A673 (cell line): ENCODE measurements at regions of chr10 and their contacts with region 1.

Region 1: DNA sequence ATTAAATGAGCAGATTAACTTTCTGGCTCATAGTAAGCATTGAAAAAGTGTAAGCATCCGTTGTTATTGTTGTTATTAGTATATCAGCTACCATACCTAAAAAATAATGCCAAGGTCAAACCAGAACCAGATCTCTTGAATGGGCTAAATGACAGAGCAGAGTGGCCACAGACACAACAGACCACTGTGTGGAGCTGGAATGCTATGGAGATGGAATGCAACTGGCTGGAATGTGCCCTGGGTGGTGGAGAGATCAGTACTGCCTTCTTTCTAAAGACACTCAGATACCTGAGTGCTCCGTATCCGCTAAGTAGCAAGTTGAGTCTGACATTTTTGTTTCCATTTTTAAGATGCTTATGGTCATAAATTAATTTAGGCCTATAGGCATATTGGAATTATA is 20.5 kb upstream of the DNAJB12 start:
- DNase-seq: no peak
- H3K4me3 ChIP-seq: no peak overlapping the region
- H3K27ac ChIP-seq: no peak overlapping the region
- H3K4me1 ChIP-seq: peaks cover 19% of the 10 kb centered on the region
- H3K27me3 ChIP-seq: no peaks in the 10 kb centered on the region
- CTCF ChIP-seq: no peak

Region 2: DNA sequence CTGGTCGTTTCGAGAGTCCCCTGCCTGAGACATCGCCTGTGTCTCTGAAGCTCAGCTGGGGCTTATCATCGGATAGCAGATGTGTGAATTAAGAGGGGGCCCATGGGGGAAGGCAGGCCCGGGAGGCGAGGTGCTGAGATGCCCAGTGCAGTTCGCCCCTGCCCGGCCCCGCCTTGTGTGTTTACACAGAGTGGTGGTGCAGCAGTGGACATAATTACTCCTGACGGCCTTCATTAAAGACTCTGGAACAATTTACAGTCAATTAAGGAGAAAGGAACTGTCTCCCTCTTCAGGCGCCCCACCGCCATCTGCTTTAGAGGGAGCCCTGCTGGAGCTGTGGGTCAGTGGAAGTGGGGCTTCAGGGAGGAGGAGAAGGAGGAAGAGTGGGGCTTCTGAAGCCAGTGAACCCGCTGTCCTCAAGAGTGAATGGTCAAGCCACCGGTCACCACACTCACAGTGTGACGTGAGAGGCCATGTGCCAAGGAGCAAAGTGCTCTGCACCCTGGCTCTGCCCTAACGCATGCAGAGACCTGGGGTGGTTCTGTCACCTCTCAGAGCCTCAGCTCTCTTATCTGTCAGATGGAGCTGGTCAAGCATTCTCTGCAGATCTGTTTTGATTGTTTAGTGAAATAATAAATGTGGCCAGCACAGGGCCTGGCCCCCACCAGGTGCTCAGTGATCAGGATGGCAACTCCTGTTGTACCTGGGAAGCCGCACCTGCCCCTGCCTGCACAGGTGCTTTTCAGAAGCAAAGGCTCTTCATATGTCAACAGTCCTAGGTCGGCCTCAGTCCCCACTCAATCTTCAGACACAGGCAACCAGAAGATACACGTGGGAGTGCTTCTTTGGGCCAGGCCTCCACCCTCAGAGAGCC is 912.9 kb before region 1 on chr10:
- CTCF ChIA-PET with region 1: no interaction called
- POLR2A ChIA-PET with region 1: no interaction called
- intact Hi-C with region 1: no loop called
- DNase-seq: no peak
- H3K4me3 ChIP-seq: no peak overlapping the region
- H3K27ac ChIP-seq: no peak overlapping the region
- H3K4me1 ChIP-seq: no peaks in the 10 kb centered on the region
- H3K27me3 ChIP-seq: no peaks in the 10 kb centered on the region
- CTCF ChIP-seq: no peak

Region 3: DNA sequence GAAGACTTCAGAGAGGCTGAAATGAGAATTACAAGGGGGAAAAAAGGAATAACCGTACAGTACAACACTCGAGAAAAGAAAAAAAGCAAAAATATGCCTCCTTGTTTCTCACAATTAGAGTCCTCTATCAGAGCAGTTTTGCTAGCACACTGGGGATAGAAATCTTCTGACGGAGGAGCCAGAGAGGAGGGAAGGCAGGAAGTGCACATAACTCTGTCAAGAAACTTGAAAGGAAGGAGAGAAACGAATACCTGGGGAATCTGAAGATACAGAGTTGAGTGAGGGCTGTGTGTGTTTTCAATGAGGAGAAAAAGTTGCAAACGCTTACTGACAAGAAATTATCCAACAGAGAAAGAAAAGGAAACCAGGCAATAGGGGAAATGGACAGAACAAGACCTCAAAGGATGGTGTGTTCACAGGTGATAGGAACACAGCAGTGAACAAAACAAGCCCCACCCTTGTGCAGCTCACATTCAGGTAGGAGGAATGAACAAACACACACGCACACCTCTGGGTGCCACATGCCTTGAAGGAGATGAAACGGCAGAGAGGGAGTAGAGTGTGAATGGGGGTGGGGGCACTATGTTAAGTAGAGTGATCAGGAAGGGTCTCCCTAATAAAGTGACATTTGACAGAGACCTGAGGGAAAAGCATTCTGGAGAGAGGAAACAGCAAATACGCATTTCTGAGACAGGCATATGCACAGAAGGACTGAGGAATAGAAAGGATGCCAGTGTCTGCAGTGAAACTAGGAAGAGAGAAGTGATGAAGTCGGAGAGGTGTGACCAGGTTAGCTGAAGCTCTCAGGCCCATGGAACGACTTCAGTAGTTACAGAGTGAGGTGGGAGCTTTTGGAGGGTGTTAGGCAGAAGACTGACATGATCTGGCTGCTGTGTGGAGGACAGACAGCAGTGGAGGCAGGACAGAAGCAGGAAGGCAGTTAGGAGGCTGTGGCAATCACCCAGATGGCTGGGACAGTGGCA is 240.1 kb before region 1 on chr10:
- CTCF ChIA-PET with region 1: no interaction called
- POLR2A ChIA-PET with region 1: no interaction called
- intact Hi-C with region 1: no loop called
- DNase-seq: no peak
- H3K4me3 ChIP-seq: no peak overlapping the region
- H3K27ac ChIP-seq: no peak overlapping the region
- H3K4me1 ChIP-seq: no peaks in the 10 kb centered on the region
- H3K27me3 ChIP-seq: no peaks in the 10 kb centered on the region
- CTCF ChIP-seq: no peak

Region 4: GRCh38 chr10:72552857-72553256 is 177.7 kb after region 1 on chr10:
- CTCF ChIA-PET with region 1: no interaction called
- POLR2A ChIA-PET with region 1: no interaction called
- intact Hi-C with region 1: no loop called
- DNase-seq: peak; percentile 13
- H3K4me3 ChIP-seq: no peak overlapping the region
- H3K27ac ChIP-seq: no peak overlapping the region
- H3K4me1 ChIP-seq: no peaks in the 10 kb centered on the region
- H3K27me3 ChIP-seq: no peaks in the 10 kb centered on the region
- CTCF ChIP-seq: no peak

Region 5: DNA sequence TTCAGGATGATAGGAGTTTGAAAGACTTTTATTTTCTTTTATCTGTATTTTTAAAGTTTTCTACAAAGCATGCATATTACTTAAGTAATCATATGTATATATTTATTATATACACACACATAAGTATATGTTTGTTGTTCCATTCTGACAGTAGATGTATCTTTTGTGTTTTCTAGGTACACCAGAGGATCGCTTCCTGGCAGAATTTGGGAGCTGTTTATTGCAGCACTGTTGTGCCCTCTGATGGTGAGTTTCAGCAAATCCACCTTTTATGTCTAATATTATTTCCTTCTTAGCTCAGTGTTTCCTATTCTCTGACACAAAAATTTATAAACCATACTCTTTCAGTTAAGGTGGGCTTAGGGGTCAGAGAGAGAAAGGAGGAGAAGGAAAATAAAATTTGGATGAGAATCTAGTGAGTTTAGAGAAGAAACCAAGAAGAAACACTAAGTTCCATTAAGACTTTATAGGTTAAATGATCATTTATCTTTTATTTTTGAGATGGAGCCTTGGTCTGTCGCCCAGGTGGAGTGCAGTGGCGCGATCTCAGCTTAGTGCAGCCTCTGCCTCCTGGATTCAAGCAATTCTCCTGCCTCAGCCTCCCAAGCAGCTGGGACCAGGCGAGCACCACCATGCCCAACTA is 459.1 kb after region 1 on chr10:
- CTCF ChIA-PET with region 1: interaction called, 12 read pairs
- POLR2A ChIA-PET with region 1: no interaction called
- intact Hi-C with region 1: no loop called
- DNase-seq: peak; percentile 76
- H3K4me3 ChIP-seq: no peak overlapping the region
- H3K27ac ChIP-seq: no peak overlapping the region
- H3K4me1 ChIP-seq: no peaks in the 10 kb centered on the region
- H3K27me3 ChIP-seq: no peaks in the 10 kb centered on the region
- CTCF ChIP-seq: peak; percentile 75